Endothelial cell of umbilical vein (primary cell): ENCODE measurements at regions of chr18 and their contacts with region 1.

Region 1: DNA sequence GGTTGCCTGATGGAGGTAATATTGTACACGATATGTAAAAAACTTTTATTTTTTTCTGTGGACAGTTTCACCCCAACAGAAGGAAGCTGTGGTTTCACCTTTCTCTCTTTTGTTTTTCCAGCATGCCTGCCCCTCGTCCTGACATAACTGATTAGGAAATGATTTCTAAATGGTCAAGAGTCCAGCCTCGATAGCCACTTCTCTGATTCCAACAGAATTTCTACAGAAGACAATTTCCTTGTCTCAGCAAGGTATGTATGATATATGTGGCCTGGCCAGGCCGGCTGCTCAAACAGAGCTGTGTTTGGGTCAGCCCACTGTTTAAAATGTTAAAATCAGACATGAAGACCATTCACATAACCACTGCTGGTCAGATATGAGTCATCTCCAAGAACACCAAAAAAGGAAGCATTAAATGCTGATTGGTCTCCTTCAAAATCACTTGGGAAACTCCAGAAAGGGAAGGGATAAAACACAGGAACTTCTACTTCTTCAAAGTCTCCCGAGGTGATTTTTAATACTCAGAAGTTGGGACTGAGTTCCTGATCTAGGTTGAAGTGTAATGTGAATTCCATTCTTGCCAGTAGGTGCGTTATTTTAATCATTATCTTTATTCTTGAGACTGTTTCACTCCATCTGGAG is 22.3 kb downstream of the ATP8B1 start:
- DNase-seq: peak; percentile 94
- H3K4me3 ChIP-seq: peak overlapping the region in 1 of 3 experiments; percentile 41
- H3K27ac ChIP-seq: peak overlapping the region; percentile 98
- H3K4me1 ChIP-seq: peaks cover 88% of the 10 kb centered on the region
- H3K27me3 ChIP-seq: no peaks in the 10 kb centered on the region
- CTCF ChIP-seq: no peak
- POLR2A ChIP-seq: peak; percentile 69

Region 2: DNA sequence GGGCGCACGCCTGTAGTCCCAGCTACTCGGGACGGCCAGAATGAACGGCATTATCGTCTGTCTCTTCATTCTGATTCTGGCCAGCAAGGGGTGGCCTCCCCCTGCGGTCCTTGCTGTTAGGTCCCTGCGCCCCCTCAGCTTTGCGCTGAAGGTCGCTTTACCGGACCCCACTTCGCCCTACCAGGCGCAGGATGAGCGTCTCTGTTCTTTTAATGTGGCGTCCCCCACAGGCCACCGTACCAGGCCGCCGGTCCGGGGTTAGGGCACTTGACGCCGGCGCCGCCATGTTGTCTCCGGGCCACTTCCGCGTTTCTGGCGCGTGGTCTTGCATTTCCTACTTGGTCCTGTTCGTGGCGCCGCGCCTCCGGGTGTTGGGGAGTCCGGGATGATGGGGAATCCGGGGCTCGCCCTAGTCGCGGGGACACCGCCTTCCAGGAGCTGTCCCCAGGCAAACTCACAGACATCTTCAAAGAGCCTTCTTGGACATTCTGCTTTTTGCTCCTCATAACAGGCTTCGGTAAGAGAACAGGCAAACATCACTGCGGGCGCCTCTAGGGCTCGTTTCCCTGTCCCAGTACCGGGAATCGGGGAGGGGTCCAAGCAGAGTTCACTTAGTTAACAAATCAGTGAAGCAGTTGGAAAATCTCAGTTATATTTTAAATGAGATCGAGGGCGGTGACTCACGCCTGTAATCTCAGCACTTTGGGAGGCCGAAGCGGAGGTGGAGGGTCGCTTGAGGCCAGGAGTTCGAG is 150.6 kb before region 1 on chr18:
- CTCF ChIA-PET with region 1: interaction called, 3 read pairs
- POLR2A ChIA-PET with region 1: no interaction called
- dilution Hi-C with region 1: no loop called
- intact Hi-C with region 1: loop called (anchors 2 kb)
- DNase-seq: peak; percentile 94
- H3K4me3 ChIP-seq: peak overlapping the region; percentile 44 to 74 (median 55)
- H3K27ac ChIP-seq: peak overlapping the region; percentile 63
- H3K4me1 ChIP-seq: peaks cover 27% of the 10 kb centered on the region
- H3K27me3 ChIP-seq: no peaks in the 10 kb centered on the region
- CTCF ChIP-seq: peak; percentile 73 to 75
- POLR2A ChIP-seq: peak; percentile 37

Region 3: DNA sequence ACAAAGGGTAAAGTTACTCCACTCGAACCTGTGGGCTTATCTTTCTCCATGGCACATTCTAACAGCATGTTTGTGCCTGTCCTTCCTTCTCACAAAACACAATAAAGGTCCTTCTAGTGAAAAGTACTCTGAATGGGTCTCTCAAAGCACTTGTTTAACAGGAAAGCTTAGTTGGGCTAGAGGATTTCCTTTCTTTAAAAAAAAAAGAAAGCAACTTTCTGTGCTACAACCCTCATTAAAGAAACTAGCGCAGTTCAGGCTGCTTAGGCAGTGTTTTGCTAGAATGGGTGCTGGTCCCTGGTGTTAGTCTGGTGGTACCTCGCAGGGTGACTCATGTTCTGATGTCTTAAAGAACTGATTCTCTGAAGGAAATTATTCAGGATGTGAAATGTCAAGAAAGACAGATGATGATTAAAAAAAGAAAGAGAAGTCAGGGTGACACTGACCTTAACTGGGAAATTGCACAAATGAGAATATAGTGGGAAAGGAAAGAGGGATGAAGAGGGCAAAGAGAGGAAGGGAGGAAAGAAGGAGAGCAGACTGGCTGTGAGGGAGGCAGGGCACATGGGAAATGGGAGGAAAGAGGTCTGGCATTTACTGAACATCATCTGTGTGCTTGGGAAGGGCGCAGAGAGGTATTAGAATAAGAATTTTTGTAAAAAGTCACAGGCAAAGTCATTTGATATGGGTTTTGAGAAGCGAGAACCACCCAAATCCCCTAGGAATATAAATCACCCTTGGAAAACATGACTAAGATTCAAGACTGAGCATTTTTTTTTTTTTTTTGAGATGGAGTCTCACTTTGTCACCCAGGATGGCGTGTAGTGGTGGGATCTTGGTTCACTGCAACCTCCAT is 52.6 kb before region 1 on chr18:
- CTCF ChIA-PET with region 1: no interaction called
- POLR2A ChIA-PET with region 1: interaction called, 5 read pairs
- dilution Hi-C with region 1: no loop called
- intact Hi-C with region 1: loop called (anchors 2 kb)
- DNase-seq: peak; percentile 96
- H3K4me3 ChIP-seq: no peak overlapping the region
- H3K27ac ChIP-seq: peak overlapping the region; percentile 45
- H3K4me1 ChIP-seq: peaks cover 23% of the 10 kb centered on the region
- H3K27me3 ChIP-seq: no peaks in the 10 kb centered on the region
- CTCF ChIP-seq: no peak
- POLR2A ChIP-seq: no peak

Region 4: GRCh38 chr18:57797209-57797651 is 16.4 kb after region 1 on chr18:
- CTCF ChIA-PET with region 1: interaction called, 12 read pairs
- POLR2A ChIA-PET with region 1: interaction called, 14 read pairs
- dilution Hi-C with region 1: no loop called
- intact Hi-C with region 1: no loop called
- DNase-seq: no peak
- H3K4me3 ChIP-seq: no peak overlapping the region
- H3K27ac ChIP-seq: no peak overlapping the region
- H3K4me1 ChIP-seq: peaks cover 48% of the 10 kb centered on the region
- H3K27me3 ChIP-seq: no peaks in the 10 kb centered on the region
- CTCF ChIP-seq: no peak
- POLR2A ChIP-seq: no peak

Region 5: DNA sequence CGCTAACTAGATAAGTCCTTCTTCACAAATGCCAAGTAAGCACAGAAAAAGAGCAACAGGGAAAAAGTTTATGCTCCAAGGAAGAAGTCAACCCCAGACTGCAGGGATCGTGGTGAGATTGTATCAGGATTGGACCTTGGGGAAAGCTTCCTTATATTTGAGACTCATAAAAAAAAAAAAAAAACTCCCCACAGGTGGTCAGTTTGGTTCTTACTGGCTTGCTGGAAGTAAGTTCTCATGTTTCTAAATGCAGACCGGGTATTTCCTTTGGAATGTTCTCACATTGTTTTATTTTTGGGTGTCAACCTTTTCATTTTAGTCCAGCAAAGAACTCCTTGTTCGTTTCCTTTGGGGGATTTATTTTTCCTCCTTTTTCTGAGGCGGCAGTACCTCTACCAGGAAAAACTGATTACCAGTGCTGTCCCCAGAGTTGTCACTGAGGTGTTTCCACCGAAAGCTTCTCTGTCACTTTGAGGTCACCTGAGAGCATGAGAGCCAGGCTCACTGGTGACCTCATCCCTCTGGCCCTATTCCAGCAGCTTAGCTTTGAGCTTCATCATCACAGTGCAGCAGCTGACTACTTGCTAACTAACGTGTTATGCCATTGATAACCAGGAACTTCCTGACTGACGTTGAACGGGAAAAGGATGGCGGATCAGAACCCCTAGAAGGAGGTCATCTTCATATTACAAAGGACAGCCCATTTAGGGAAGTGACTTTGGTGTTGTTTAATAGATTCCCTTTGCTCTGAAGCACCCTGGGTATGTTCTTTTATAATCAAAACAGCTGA is 39.0 kb after region 1 on chr18:
- CTCF ChIA-PET with region 1: interaction called, 9 read pairs
- POLR2A ChIA-PET with region 1: interaction called, 7 read pairs
- dilution Hi-C with region 1: no loop called
- intact Hi-C with region 1: loop called (anchors 1 kb)
- DNase-seq: peak; percentile 99
- H3K4me3 ChIP-seq: no peak overlapping the region
- H3K27ac ChIP-seq: peak overlapping the region; percentile 96
- H3K4me1 ChIP-seq: peaks cover 18% of the 10 kb centered on the region
- H3K27me3 ChIP-seq: no peaks in the 10 kb centered on the region
- CTCF ChIP-seq: no peak
- POLR2A ChIP-seq: peak; percentile 43

Region 6: DNA sequence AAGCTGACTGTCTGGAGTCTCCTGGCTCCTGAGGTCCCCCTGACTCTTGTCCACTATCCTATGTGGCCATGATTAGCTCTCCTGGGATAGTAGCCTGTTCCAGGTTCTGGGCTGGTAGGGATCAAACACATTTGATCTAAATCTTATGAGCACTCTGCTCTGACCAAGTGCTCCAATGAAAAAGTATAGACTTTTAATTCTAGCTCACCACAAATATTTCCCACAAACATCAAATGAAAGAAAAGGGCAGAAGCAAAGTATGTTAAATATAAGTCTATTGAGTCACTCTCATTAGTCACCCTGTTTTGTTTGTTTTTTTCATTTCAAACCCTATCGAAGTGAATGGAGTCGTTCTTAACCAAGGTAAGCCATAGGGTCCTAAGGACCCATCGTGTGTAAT is 223.5 kb after region 1 on chr18:
- CTCF ChIA-PET with region 1: no interaction called
- POLR2A ChIA-PET with region 1: no interaction called
- dilution Hi-C with region 1: no loop called
- intact Hi-C with region 1: no loop called
- DNase-seq: no peak
- H3K4me3 ChIP-seq: no peak overlapping the region
- H3K27ac ChIP-seq: no peak overlapping the region
- H3K4me1 ChIP-seq: peaks cover 3% of the 10 kb centered on the region
- H3K27me3 ChIP-seq: peaks cover 0 to 2% of the 10 kb centered on the region in 2 experiments
- CTCF ChIP-seq: no peak
- POLR2A ChIP-seq: no peak

Region 7: DNA sequence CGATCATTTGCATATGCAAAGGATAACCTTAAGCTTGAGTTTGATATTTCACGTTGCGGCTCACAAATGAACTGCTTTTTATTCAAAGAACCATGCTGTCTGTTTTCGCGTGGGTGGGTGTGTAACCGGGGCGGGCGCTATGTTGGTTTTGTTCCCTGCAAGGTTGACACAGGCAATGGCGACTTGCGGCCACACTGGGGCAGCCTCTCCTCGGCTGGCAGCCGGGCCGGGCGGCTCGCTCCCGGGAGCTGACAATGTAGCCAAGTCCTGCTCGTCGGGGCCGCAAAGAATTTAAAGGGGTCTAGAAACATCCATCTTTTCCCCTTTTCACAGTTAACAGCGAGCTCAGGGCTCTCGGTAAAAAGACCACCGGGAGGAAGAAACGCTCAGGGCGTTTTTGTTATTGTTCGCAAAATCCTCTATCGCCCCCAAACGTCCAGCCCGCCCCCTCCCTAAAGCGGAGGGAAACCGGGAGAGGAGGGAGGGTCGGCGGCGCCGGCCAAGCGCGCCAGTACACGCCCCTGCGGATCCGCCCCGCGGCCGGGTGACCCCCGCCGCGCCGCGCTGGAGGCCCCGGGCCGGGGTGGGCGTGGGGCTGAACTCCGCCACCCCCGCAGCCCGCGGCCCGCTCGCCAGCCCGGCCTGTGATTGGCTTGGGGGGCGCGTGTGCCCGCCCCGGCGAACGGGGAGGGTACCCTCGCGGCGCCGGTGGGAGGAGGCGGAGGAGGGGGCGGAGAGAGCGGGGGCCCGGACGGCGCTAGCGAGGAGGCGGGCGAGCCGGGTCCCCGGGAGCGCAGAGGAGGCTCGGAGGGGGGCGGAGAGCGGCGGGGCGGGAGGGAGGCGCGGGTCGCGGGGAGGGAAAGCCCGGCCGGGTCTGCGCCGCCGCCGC is 262.9 kb after region 1 on chr18 and contains the start of gene NEDD4L:
- CTCF ChIA-PET with region 1: no interaction called
- POLR2A ChIA-PET with region 1: no interaction called
- dilution Hi-C with region 1: no loop called
- intact Hi-C with region 1: loop called (anchors 10 kb)
- DNase-seq: peak; percentile 87
- H3K4me3 ChIP-seq: peak within 1 kb of the TSS; percentile 75 to 93 (median 77)
- H3K27ac ChIP-seq: peak within 1 kb of the TSS; percentile 72
- H3K4me1 ChIP-seq: peaks cover 16% of the 10 kb centered on the region
- H3K27me3 ChIP-seq: no peaks in the 10 kb centered on the region
- CTCF ChIP-seq: peak; percentile 79 to 91
- POLR2A ChIP-seq: no peak
- total RNA-seq, gene NEDD4L: 78.9 and 95.9 TPM in 2 replicates